ENCODE measurements at regions of chr16 and their contacts with region 1.

Region 1: DNA sequence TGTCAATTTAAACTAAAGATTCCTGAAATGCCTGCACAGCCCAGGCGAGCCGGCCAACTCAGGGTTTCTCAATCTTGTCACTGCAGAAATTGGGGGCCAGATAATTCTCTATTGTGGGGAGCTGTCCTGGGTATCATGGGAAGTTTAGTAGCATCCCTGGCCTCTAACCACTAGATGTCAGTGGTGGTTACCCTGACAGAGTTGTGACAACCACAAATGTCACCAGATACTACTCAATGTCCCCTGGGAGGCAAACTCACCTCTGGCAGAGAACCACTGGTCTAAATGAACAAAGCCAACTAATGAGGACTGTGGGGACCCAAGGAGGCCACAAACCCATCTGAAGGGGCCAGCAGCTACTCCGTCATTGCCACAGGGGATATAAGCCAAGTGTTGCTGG is 90.9 kb downstream of the MYH11 start:
- DNase-seq: peak; percentile 54
- H3K4me3 Mint-ChIP-seq: no peak overlapping the region
- H3K27ac Mint-ChIP-seq: no peak overlapping the region
- H3K4me1 Mint-ChIP-seq: no peaks in the 10 kb centered on the region
- H3K27me3 Mint-ChIP-seq: no peaks in the 10 kb centered on the region

Region 2: DNA sequence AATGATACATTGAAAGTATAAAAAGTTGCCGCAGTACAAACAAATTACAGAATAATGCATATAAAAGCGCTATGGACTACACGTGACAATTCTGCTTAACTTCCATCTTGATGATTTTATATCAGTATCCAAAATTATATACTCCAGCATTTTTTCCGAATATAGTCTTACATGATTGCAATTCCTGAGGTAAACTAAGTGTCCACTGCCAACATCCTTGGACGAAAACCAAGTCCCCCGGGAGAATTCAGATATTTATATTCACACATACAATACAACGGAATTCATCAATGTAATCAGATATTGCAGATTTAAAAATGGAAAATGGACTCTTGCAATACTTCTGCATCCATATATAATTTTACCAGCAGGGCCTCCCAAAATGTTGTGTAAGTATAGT is 99.9 kb after region 1 on chr16:
- CTCF ChIA-PET with region 1: no interaction called
- DNase-seq: no peak
- H3K4me3 Mint-ChIP-seq: no peak overlapping the region
- H3K27ac Mint-ChIP-seq: no peak overlapping the region
- H3K4me1 Mint-ChIP-seq: no peaks in the 10 kb centered on the region
- H3K27me3 Mint-ChIP-seq: peaks cover 10% of the 10 kb centered on the region

Region 3: GRCh38 chr16:16127469-16128116 is 361.7 kb after region 1 on chr16:
- CTCF ChIA-PET with region 1: interaction called, 10 read pairs
- DNase-seq: peak; percentile 79
- H3K4me3 Mint-ChIP-seq: no peak overlapping the region
- H3K27ac Mint-ChIP-seq: no peak overlapping the region
- H3K4me1 Mint-ChIP-seq: no peaks in the 10 kb centered on the region
- H3K27me3 Mint-ChIP-seq: no peaks in the 10 kb centered on the region